ENCODE measurements at regions of chr4 and their contacts with region 1.

Region 1: GRCh38 chr4:48047421-48047844 is 30.9 kb downstream of the NIPAL1 start:
- DNase-seq: peak; percentile 65
- ATAC-seq: peak; percentile 94
- H3K4me3 Mint-ChIP-seq: peak overlapping the region; percentile 72
- H3K27ac Mint-ChIP-seq: peak overlapping the region; percentile 65
- H3K4me1 Mint-ChIP-seq: peaks cover 63% of the 10 kb centered on the region
- H3K27me3 Mint-ChIP-seq: peaks cover 42% of the 10 kb centered on the region
- CTCF ChIP-seq: no peak

Region 2: GRCh38 chr4:47914220-47914925 is 133.1 kb before region 1 on chr4 and contains the start of gene NFXL1:
- CTCF ChIA-PET with region 1: no interaction called
- POLR2A ChIA-PET with region 1: no interaction called
- intact Hi-C with region 1: loop called (anchors 1 kb)
- DNase-seq: peak; percentile 90
- ATAC-seq: peak; percentile 96
- H3K4me3 Mint-ChIP-seq: peak within 1 kb of the TSS; percentile 98
- H3K27ac Mint-ChIP-seq: peak within 1 kb of the TSS; percentile 92
- H3K4me1 Mint-ChIP-seq: peaks cover 31% of the 10 kb centered on the region
- H3K27me3 Mint-ChIP-seq: no peaks in the 10 kb centered on the region
- CTCF ChIP-seq: no peak
- total RNA-seq, gene NFXL1: 10.0 and 11.1 TPM in 2 replicates

Region 3: GRCh38 chr4:48033825-48034413 is 13.5 kb before region 1 on chr4:
- CTCF ChIA-PET with region 1: interaction called, 54 read pairs
- POLR2A ChIA-PET with region 1: interaction called, 60 read pairs
- intact Hi-C with region 1: loop called (anchors 1 kb)
- DNase-seq: no peak
- ATAC-seq: peak; percentile 69
- H3K4me3 Mint-ChIP-seq: no peak overlapping the region
- H3K27ac Mint-ChIP-seq: peak overlapping the region; percentile 36
- H3K4me1 Mint-ChIP-seq: peaks cover 46% of the 10 kb centered on the region
- H3K27me3 Mint-ChIP-seq: peaks cover 2% of the 10 kb centered on the region
- CTCF ChIP-seq: peak; percentile 23

Region 4: GRCh38 chr4:48212165-48212564 is 164.7 kb after region 1 on chr4:
- CTCF ChIA-PET with region 1: no interaction called
- POLR2A ChIA-PET with region 1: no interaction called
- intact Hi-C with region 1: loop called (anchors 5 kb)
- DNase-seq: no peak
- ATAC-seq: peak; percentile 73
- H3K4me3 Mint-ChIP-seq: peak overlapping the region; percentile 68
- H3K27ac Mint-ChIP-seq: peak overlapping the region; percentile 83
- H3K4me1 Mint-ChIP-seq: peaks cover 38% of the 10 kb centered on the region
- H3K27me3 Mint-ChIP-seq: no peaks in the 10 kb centered on the region
- CTCF ChIP-seq: no peak

Measured in activated B cell treated with CpG ODN at 0.5 μM for 24 hours (primary cell).